ENCODE measurements at regions of chr1 and their contacts with region 1.

Region 1: GRCh38 chr1:165073185-165074007 is 283.1 kb downstream of the LMX1A start:
- DNase-seq: no peak
- ATAC-seq: peak; percentile 55
- H3K4me3 ChIP-seq: no peak overlapping the region
- H3K4me1 ChIP-seq: no peaks in the 10 kb centered on the region
- CTCF ChIP-seq: peak; percentile 33

Region 2: GRCh38 chr1:163535807-163536206 is 1537.6 kb before region 1 on chr1:
- intact Hi-C with region 1: loop called in 1 of 2 experiments (anchors 10 kb)
- DNase-seq: no peak
- ATAC-seq: no peak
- H3K4me3 ChIP-seq: no peak overlapping the region
- H3K4me1 ChIP-seq: no peaks in the 10 kb centered on the region
- CTCF ChIP-seq: no peak